Activated naive CD8-positive, alpha-beta T cell treated with anti-CD3 and anti-CD28 coated beads, Interleukin-2, amount 10 ng/mL, durations not matched to agents 7 days and 5 days (primary cell): ENCODE measurements at regions of chr3 and their contacts with region 1.

Region 1: GRCh38 chr3:13427662-13428603 is 7.8 kb upstream of the NUP210 start:
- DNase-seq: no peak
- ATAC-seq: peak; percentile 97
- H3K4me3 Mint-ChIP-seq: peak overlapping the region; percentile 58
- H3K27ac Mint-ChIP-seq: peak overlapping the region; percentile 73
- H3K4me1 Mint-ChIP-seq: peaks cover 21% of the 10 kb centered on the region
- H3K27me3 Mint-ChIP-seq: no peaks in the 10 kb centered on the region

Region 2: DNA sequence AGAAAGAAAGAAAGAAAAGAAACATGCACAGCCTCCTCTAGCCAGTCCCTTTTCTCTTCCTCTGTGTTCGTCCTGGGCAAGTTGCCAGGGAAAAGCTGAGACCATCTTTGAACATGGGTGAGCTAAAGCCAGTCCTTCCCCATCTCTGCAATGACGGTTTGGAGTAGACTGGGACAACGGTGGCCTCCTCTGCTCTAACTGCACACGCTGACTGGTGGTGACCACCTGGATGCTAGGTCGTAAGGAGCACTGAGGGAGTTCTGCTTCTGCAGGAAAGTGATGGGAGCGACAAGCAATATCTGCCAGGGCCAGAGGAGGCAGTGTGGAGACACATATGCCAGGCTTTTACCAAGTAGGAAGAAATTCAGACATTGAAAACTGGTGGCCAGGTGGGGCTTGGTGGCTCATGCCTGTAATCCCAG is 119.5 kb before region 1 on chr3:
- POLR2A ChIA-PET with region 1: no interaction called
- DNase-seq: no peak
- ATAC-seq: no peak
- H3K4me3 Mint-ChIP-seq: no peak overlapping the region
- H3K27ac Mint-ChIP-seq: no peak overlapping the region
- H3K4me1 Mint-ChIP-seq: no peaks in the 10 kb centered on the region
- H3K27me3 Mint-ChIP-seq: no peaks in the 10 kb centered on the region

Region 3: GRCh38 chr3:13379201-13379830 is 48.6 kb before region 1 on chr3:
- POLR2A ChIA-PET with region 1: no interaction called
- DNase-seq: no peak
- ATAC-seq: no peak
- H3K4me3 Mint-ChIP-seq: no peak overlapping the region
- H3K27ac Mint-ChIP-seq: no peak overlapping the region
- H3K4me1 Mint-ChIP-seq: peaks cover 2% of the 10 kb centered on the region
- H3K27me3 Mint-ChIP-seq: no peaks in the 10 kb centered on the region

Region 4: DNA sequence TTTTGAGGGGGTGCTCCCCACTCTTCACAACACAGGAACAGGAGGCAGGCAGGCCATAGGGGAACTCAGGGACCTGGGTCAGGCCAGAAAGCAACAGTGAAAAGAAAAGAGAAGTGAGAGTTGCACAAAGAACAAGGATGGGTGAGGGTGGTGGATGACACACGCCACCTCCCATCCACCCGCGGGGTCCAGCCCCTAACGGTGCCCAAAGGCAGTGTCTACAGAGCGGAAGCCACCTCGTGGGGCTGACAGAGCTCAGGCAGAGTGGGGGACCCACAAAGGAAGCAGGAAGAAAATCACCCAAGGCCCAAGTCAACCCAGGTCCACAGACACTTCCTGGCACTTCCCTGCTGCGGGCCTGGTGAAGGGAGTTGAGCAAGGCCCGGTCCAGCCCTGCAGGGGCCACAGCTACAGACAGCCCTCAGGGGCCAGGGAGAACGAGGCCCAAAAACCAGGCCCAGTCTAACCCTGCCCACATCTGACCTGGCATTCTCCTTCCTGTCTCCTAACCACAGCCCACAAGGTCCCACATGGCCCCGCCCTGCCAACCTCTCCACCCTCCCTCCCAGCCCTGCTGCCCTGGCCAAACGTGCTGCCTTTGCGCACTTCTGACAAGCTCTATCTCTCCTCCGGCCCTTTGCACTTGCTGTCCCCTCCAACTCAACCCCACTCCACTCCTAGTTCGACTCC is 13.7 kb before region 1 on chr3:
- POLR2A ChIA-PET with region 1: interaction called, 18 read pairs
- DNase-seq: peak; percentile 77
- ATAC-seq: peak; percentile 93
- H3K4me3 Mint-ChIP-seq: peak overlapping the region; percentile 79
- H3K27ac Mint-ChIP-seq: peak overlapping the region; percentile 90
- H3K4me1 Mint-ChIP-seq: peaks cover 53% of the 10 kb centered on the region
- H3K27me3 Mint-ChIP-seq: no peaks in the 10 kb centered on the region